Activated CD4-positive, alpha-beta T cell treated with anti-CD3 and anti-CD28 coated beads for 36 hours (primary cell): ENCODE measurements at regions of chr12 and their contacts with region 1.

Region 1: DNA sequence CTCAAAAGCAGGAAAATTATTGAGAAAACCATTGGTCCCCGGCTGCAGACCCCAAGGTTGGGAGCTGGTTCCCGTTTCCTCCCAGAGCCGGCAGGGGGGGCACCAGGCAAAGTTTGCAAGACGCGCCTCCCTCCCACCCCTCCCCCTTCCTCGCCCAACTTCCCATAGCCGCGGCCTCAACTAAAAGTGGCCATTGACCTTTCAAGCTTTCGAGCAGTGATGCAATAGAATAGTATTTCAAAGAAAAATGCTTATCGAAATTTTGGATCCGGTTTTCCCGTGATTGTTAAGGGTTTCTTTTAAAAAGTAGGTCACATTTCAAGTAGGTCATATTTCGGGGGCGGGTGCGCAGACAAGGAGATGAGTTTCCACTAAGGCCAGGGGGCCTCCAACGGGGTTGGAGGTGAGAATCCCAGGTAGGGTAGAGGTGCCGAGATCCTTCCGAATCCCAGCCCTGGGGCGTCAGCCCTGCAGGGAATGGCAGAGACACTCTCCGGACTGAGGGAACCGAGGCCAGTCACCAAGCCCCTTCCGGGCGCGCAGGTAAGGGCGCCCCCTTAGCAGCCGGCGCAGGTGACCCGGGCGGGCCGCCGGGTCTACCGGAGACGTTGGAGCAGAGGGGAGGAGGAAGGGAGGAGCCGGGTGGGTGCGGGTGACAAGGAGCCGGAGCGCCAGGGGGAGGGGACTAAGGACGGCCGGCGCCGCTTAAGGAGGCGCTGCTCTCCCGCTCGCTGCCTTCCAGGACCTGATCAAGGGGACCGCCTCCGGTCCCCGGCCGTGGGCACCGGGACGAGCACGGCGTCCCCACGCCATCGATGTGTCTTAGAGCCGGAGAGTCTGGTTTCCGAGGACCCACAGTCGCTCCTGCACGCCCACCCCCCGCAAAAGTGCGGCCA is 2.6 kb upstream of the SOCS2 start:
- DNase-seq: peak; percentile 88
- ATAC-seq: peak; percentile 67
- H3K4me3 Mint-ChIP-seq: peak overlapping the region; percentile 82
- H3K27ac Mint-ChIP-seq: peak overlapping the region; percentile 75
- H3K4me1 Mint-ChIP-seq: peaks cover 16% of the 10 kb centered on the region
- H3K27me3 Mint-ChIP-seq: peaks cover 23% of the 10 kb centered on the region

Region 2: GRCh38 chr12:93467351-93468007 is 102.4 kb before region 1 on chr12 and contains the start of gene MRPL42:
- CTCF ChIA-PET with region 1: no interaction called
- POLR2A ChIA-PET with region 1: no interaction called
- intact Hi-C with region 1: loop called in 1 of 2 experiments (anchors 1 kb)
- DNase-seq: peak; percentile 95
- ATAC-seq: peak; percentile 91
- H3K4me3 Mint-ChIP-seq: peak within 1 kb of the TSS; percentile 95
- H3K27ac Mint-ChIP-seq: peak within 1 kb of the TSS; percentile 93
- H3K4me1 Mint-ChIP-seq: peaks cover 29% of the 10 kb centered on the region
- H3K27me3 Mint-ChIP-seq: no peaks in the 10 kb centered on the region
- total RNA-seq, gene MRPL42: 78.7 to 98.3 TPM

Region 3: DNA sequence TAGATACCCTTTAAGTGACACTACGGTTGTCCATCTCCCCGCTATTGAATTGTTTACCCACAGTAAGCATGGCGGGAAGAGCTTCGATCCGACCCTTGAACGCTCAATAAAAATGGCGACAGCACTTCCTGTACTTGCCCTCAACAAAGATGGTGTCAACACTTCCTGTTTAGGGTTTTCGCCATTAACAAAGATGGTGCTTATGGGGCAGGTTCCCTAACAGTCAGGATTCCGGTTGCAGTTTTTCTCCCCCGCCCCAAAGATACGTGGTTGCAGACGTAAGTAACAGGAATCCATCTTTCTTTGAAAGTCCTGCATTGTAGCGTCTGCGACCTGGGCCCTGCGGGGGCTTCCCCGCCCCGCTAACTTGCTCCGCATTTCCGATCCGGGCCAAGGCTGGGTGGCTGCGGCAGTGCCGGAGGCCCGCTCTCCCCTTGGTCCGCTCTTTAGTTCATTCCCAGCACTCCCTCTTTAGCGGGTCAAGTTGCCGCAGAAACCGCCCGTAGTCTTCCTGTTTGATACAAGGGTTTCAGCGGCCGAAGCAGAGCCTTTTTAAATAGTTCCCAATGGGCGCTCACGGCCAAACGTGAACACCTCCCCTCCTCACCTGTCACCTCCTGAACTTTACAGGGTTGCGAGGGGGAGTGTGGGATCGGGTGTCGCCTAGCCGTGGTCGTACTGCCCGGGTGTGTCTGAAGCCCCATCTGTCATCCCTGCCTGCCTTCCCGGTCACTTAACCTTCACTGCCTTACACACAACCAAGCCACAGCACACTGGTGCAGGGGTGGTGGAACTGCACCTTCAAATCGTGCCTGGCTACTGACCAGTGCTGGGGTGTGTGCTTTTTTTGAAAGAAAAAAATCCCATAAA is 107.5 kb after region 1 on chr12 and contains the start of gene CRADD:
- CTCF ChIA-PET with region 1: interaction called, 3 read pairs
- POLR2A ChIA-PET with region 1: no interaction called
- intact Hi-C with region 1: loop called (anchors 1 kb)
- DNase-seq: peak; percentile 90
- ATAC-seq: peak; percentile 97
- H3K4me3 Mint-ChIP-seq: peak within 1 kb of the TSS; percentile 97
- H3K27ac Mint-ChIP-seq: peak within 1 kb of the TSS; percentile 100
- H3K4me1 Mint-ChIP-seq: peaks cover 29% of the 10 kb centered on the region
- H3K27me3 Mint-ChIP-seq: peaks cover 8% of the 10 kb centered on the region
- total RNA-seq, gene CRADD: 5.7 to 7.8 TPM

Region 4: GRCh38 chr12:93773122-93773871 is 203.4 kb after region 1 on chr12:
- CTCF ChIA-PET with region 1: no interaction called
- POLR2A ChIA-PET with region 1: no interaction called
- intact Hi-C with region 1: loop called in 1 of 2 experiments (anchors 2 kb)
- DNase-seq: peak; percentile 74
- ATAC-seq: peak; percentile 93
- H3K4me3 Mint-ChIP-seq: peak overlapping the region; percentile 56
- H3K27ac Mint-ChIP-seq: peak overlapping the region; percentile 59
- H3K4me1 Mint-ChIP-seq: peaks cover 45% of the 10 kb centered on the region
- H3K27me3 Mint-ChIP-seq: no peaks in the 10 kb centered on the region

Region 5: GRCh38 chr12:94074980-94075928 is 505.4 kb after region 1 on chr12:
- CTCF ChIA-PET with region 1: no interaction called
- POLR2A ChIA-PET with region 1: no interaction called
- intact Hi-C with region 1: loop called in 1 of 2 experiments (anchors 1 kb)
- DNase-seq: peak; percentile 46
- ATAC-seq: peak; percentile 85
- H3K4me3 Mint-ChIP-seq: no peak overlapping the region
- H3K27ac Mint-ChIP-seq: peak overlapping the region; percentile 4
- H3K4me1 Mint-ChIP-seq: peaks cover 22% of the 10 kb centered on the region
- H3K27me3 Mint-ChIP-seq: peaks cover 6% of the 10 kb centered on the region

Region 6: DNA sequence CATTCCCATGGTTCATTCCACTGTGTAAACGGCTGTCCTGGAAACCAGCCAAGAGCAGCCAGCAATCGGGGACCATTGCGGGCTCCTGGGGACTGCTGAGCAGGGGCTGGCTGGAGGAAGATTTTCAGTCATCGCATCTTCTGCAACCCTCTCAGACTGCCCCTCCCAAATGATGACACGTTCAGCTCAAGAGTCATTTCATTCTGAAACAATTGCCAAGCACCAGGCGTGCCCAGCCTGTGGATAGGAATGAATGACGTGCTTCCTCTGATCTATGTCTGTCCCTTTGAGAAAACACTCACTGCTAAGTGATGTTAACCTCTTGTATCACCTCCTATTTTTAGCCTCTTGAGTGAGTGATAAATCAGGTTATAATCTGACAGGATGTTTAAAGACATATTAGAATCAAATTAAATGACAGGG is 1371.5 kb after region 1 on chr12:
- CTCF ChIA-PET with region 1: no interaction called
- POLR2A ChIA-PET with region 1: no interaction called
- intact Hi-C with region 1: loop called in 1 of 2 experiments (anchors 5 kb)
- DNase-seq: peak; percentile 79
- ATAC-seq: peak; percentile 96
- H3K4me3 Mint-ChIP-seq: peak overlapping the region; percentile 15
- H3K27ac Mint-ChIP-seq: peak overlapping the region; percentile 87
- H3K4me1 Mint-ChIP-seq: peaks cover 35% of the 10 kb centered on the region
- H3K27me3 Mint-ChIP-seq: peaks cover 7% of the 10 kb centered on the region